ENCODE measurements at regions of chr7 and their contacts with region 1.

Region 1: GRCh38 chr7:134632937-134633540 is 13.6 kb upstream of the BPGM start:
- DNase-seq: peak; percentile 61
- H3K4me3 Mint-ChIP-seq: no peak overlapping the region
- H3K27ac Mint-ChIP-seq: no peak overlapping the region
- H3K4me1 Mint-ChIP-seq: peaks cover 14% of the 10 kb centered on the region
- H3K27me3 Mint-ChIP-seq: no peaks in the 10 kb centered on the region
- CTCF ChIP-seq: peak; percentile 73

Region 2: DNA sequence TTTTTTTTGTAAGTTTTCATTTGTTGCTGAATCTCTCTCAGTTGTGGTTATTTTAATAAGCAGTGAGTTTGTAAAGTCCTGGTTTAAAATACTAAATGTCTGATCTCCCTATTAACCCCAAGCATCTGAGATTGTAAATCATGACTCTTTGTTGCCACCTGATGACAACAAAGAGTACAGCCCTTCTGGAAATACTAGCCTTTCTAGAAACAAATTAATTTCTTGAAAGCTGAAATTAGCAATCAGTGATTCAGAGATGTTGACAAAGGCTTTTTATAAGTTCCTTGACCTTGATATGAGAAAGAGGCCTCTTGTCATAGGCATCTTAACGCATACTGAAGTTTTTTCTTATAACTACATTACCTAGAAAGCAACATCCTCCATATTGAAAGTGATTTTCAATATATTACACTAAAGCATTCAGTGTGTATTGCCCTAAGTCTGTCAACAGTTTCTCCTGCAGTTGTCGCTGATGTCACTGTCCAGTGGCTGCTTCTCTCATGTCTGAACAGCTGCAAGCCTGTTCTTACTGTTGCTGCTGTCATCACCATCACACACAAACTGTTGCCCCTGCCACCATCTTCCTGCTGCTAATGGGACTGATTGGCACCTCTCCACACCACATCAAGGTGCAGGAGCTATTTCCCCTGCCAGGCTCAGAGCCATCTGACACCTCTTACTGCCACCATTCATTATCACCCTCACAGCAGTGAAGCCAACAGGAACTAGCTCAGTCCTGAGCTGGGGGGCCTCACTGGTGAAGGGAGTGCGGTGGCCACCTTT is 601.0 kb before region 1 on chr7:
- CTCF ChIA-PET with region 1: no interaction called
- POLR2A ChIA-PET with region 1: no interaction called
- intact Hi-C with region 1: no loop called
- DNase-seq: no peak
- H3K4me3 Mint-ChIP-seq: no peak overlapping the region
- H3K27ac Mint-ChIP-seq: no peak overlapping the region
- H3K4me1 Mint-ChIP-seq: no peaks in the 10 kb centered on the region
- H3K27me3 Mint-ChIP-seq: no peaks in the 10 kb centered on the region
- CTCF ChIP-seq: no peak

Region 3: GRCh38 chr7:134553976-134554375 is 79.1 kb before region 1 on chr7:
- CTCF ChIA-PET with region 1: no interaction called
- POLR2A ChIA-PET with region 1: no interaction called
- intact Hi-C with region 1: no loop called
- DNase-seq: peak; percentile 45
- H3K4me3 Mint-ChIP-seq: no peak overlapping the region
- H3K27ac Mint-ChIP-seq: no peak overlapping the region
- H3K4me1 Mint-ChIP-seq: peaks cover 3% of the 10 kb centered on the region
- H3K27me3 Mint-ChIP-seq: no peaks in the 10 kb centered on the region
- CTCF ChIP-seq: no peak

Region 4: GRCh38 chr7:134565643-134566136 is 67.3 kb before region 1 on chr7:
- CTCF ChIA-PET with region 1: no interaction called
- POLR2A ChIA-PET with region 1: no interaction called
- intact Hi-C with region 1: no loop called
- DNase-seq: peak; percentile 56
- H3K4me3 Mint-ChIP-seq: no peak overlapping the region
- H3K27ac Mint-ChIP-seq: no peak overlapping the region
- H3K4me1 Mint-ChIP-seq: peaks cover 18% of the 10 kb centered on the region
- H3K27me3 Mint-ChIP-seq: no peaks in the 10 kb centered on the region
- CTCF ChIP-seq: no peak

Region 5: GRCh38 chr7:134613623-134614347 is 19.3 kb before region 1 on chr7:
- CTCF ChIA-PET with region 1: interaction called, 25 read pairs
- POLR2A ChIA-PET with region 1: interaction called, 6 read pairs
- intact Hi-C with region 1: loop called (anchors 2 kb)
- DNase-seq: peak; percentile 97
- H3K4me3 Mint-ChIP-seq: no peak overlapping the region
- H3K27ac Mint-ChIP-seq: peak overlapping the region; percentile 85
- H3K4me1 Mint-ChIP-seq: peaks cover 39% of the 10 kb centered on the region
- H3K27me3 Mint-ChIP-seq: no peaks in the 10 kb centered on the region
- CTCF ChIP-seq: no peak

Region 6: DNA sequence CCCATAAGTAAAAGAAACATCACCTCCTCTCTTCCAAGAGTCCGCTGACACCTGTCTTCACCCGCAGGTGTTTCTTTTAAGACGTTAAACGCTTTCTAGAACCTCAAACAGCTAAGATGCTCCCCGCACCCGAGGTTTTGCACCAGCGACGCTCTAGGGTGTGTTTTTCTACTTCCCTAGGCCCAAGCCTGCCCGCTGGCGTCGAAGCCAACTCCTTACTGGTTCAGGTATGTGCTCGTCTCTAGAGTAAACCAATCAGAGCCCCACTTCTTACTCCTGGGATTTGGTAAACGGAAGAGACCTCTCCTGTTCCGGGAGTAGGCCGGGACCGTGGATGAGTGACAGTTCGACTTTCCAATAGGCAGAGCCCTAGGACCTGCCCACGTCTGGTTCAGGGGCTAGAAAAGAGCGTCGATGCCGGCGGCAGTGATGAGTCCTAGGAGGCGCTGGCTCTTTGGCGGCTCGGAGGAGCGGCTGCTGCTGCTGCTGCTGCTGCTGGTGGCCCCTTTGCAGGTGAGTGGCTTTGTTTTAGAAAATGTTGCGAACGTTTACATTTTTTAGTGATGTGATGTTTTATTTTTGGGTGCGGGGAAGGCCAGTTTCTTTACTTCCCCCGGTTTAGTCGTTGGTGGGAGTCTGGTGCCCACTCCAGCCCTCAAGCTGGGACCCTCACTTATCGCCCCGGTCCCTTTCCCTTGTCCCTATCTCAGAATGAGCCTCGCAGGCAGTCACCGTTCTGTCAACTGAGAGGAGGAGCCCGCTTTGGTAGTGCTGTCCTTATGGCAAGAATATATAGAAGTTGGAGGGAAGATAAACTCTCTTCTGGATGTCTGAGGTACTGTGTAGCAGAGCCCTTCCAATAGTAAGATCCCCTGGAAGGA is 13.6 kb after region 1 on chr7 and contains the start of gene BPGM:
- CTCF ChIA-PET with region 1: interaction called, 4 read pairs
- POLR2A ChIA-PET with region 1: interaction called, 75 read pairs
- intact Hi-C with region 1: no loop called
- DNase-seq: peak; percentile 100
- H3K4me3 Mint-ChIP-seq: no peak within 1 kb of the TSS
- H3K27ac Mint-ChIP-seq: no peak within 1 kb of the TSS
- H3K4me1 Mint-ChIP-seq: peaks cover 8% of the 10 kb centered on the region
- H3K27me3 Mint-ChIP-seq: no peaks in the 10 kb centered on the region
- CTCF ChIP-seq: no peak
- total RNA-seq, gene BPGM: 8.2 and 10.8 TPM in 2 replicates

Region 7: GRCh38 chr7:134755401-134756022 is 122.5 kb after region 1 on chr7:
- CTCF ChIA-PET with region 1: no interaction called
- POLR2A ChIA-PET with region 1: no interaction called
- intact Hi-C with region 1: loop called (anchors 1 kb)
- DNase-seq: peak; percentile 14
- H3K4me3 Mint-ChIP-seq: no peak overlapping the region
- H3K27ac Mint-ChIP-seq: no peak overlapping the region
- H3K4me1 Mint-ChIP-seq: peaks cover 9% of the 10 kb centered on the region
- H3K27me3 Mint-ChIP-seq: no peaks in the 10 kb centered on the region
- CTCF ChIP-seq: peak; percentile 29

Region 8: GRCh38 chr7:134811765-134812164 is 178.7 kb after region 1 on chr7:
- CTCF ChIA-PET with region 1: no interaction called
- POLR2A ChIA-PET with region 1: no interaction called
- intact Hi-C with region 1: no loop called
- DNase-seq: no peak
- H3K4me3 Mint-ChIP-seq: no peak overlapping the region
- H3K27ac Mint-ChIP-seq: peak overlapping the region; percentile 47
- H3K4me1 Mint-ChIP-seq: peaks cover 5% of the 10 kb centered on the region
- H3K27me3 Mint-ChIP-seq: no peaks in the 10 kb centered on the region
- CTCF ChIP-seq: no peak

Region 9: GRCh38 chr7:134943764-134944400 is 310.8 kb after region 1 on chr7:
- CTCF ChIA-PET with region 1: no interaction called
- POLR2A ChIA-PET with region 1: no interaction called
- intact Hi-C with region 1: loop called (anchors 1 kb)
- DNase-seq: peak; percentile 42
- H3K4me3 Mint-ChIP-seq: no peak overlapping the region
- H3K27ac Mint-ChIP-seq: no peak overlapping the region
- H3K4me1 Mint-ChIP-seq: peaks cover 10% of the 10 kb centered on the region
- H3K27me3 Mint-ChIP-seq: no peaks in the 10 kb centered on the region
- CTCF ChIP-seq: peak; percentile 52

Measured in MCF 10A (cell line).